A673 (cell line): ENCODE measurements at regions of chr17 and their contacts with region 1.

Region 1: GRCh38 chr17:78268951-78269905 is 37.8 kb downstream of the TMEM235 start:
- DNase-seq: no peak
- H3K4me3 ChIP-seq: no peak overlapping the region
- H3K27ac ChIP-seq: no peak overlapping the region
- H3K4me1 ChIP-seq: peaks cover 31% of the 10 kb centered on the region
- H3K27me3 ChIP-seq: no peaks in the 10 kb centered on the region
- CTCF ChIP-seq: no peak

Region 2: DNA sequence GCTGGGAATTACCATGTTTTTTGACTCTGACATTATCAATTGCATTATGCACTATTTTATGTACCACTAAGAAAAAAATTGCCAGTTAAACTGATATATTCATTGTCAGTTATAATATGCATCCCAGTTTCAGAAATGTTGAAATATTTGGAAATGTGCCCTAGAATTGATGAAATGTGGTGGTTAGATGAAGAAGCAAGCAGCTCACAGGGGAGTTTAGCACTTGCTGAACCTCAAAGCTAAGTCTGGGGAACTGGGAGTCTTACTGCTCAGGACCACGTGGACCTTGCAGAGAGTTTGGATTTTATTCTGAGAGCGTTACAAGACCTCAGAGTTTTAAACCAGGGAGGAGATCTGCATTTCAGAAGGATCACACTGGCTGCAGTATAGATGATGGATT is 242.8 kb before region 1 on chr17:
- CTCF ChIA-PET with region 1: no interaction called
- POLR2A ChIA-PET with region 1: no interaction called
- intact Hi-C with region 1: no loop called
- DNase-seq: no peak
- H3K4me3 ChIP-seq: no peak overlapping the region
- H3K27ac ChIP-seq: no peak overlapping the region
- H3K4me1 ChIP-seq: no peaks in the 10 kb centered on the region
- H3K27me3 ChIP-seq: no peaks in the 10 kb centered on the region
- CTCF ChIP-seq: no peak

Region 3: GRCh38 chr17:78257810-78258322 is 11.4 kb before region 1 on chr17:
- CTCF ChIA-PET with region 1: no interaction called
- POLR2A ChIA-PET with region 1: no interaction called
- intact Hi-C with region 1: no loop called
- DNase-seq: no peak
- H3K4me3 ChIP-seq: no peak overlapping the region
- H3K27ac ChIP-seq: peak overlapping the region; percentile 23
- H3K4me1 ChIP-seq: peaks cover 16% of the 10 kb centered on the region
- H3K27me3 ChIP-seq: no peaks in the 10 kb centered on the region
- CTCF ChIP-seq: no peak

Region 4: GRCh38 chr17:78538033-78538776 is 269.0 kb after region 1 on chr17:
- CTCF ChIA-PET with region 1: interaction called, 10 read pairs
- POLR2A ChIA-PET with region 1: no interaction called
- intact Hi-C with region 1: no loop called
- DNase-seq: no peak
- H3K4me3 ChIP-seq: no peak overlapping the region
- H3K27ac ChIP-seq: no peak overlapping the region
- H3K4me1 ChIP-seq: no peaks in the 10 kb centered on the region
- H3K27me3 ChIP-seq: no peaks in the 10 kb centered on the region
- CTCF ChIP-seq: no peak